Ascending aorta (tissue), 2 donors: ENCODE measurements at regions of chr1 and their contacts with region 1.

Region 1: DNA sequence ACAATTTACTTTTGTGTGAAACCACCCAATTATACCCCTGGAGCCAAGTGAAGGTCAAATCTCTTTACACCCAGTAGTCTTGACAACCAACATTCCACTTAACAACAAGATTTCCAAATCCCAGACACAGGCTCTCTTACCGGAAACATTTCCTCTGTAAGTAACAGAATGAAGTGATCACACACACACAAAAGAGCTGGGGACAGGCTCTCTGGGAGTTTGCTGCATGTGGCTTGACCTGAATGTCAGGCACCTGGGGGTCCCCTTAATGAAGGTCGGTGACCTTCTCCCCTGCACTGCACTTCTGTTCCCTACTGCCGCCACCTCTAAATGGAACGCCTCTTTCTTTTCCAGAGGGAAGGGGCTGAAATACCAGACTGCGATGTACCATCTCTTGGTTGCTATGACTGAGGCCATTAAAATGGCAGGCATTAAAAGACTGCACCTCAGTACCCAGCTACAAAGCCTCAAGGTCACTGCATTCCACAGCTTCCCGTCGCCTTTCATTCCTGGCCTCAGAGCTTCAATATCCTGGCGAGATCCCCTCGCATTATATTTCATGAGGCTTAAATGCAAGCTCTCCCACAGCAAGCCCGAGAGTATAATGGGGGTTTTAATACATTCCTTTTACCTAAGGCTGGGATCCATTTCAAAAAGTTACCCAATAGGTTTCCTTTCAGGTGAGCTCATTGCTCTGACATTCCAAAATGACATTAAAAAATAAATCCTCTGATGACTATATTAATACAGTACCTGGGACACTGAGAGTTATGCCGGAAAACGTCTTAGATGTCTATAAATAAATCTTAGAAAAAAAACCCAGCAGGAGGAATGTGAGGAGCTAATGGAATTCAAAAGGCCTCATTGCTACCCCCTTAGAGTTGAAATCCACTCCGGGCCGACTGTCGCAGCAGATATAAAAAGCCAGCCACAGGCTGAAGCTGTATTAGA is 90.9 kb upstream of the DIRAS3 start:
- DNase-seq: no peak
- H3K4me3 ChIP-seq: no peak overlapping the region
- H3K27ac ChIP-seq: peak overlapping the region; percentile 27 to 54
- H3K4me1 ChIP-seq: peaks cover 0 to 13% of the 10 kb centered on the region in 2 donors
- H3K27me3 ChIP-seq: no peaks in the 10 kb centered on the region
- CTCF ChIP-seq: no peak

Region 2: GRCh38 chr1:67535474-67535873 is 605.9 kb before region 1 on chr1:
- intact Hi-C with region 1: no loop called
- DNase-seq: peak; percentile 33 to 90
- H3K4me3 ChIP-seq: no peak overlapping the region
- H3K27ac ChIP-seq: no peak overlapping the region
- H3K4me1 ChIP-seq: peaks cover 0 to 18% of the 10 kb centered on the region in 2 donors
- H3K27me3 ChIP-seq: no peaks in the 10 kb centered on the region
- CTCF ChIP-seq: peak; percentile 88 to 97 (median 94)

Region 3: DNA sequence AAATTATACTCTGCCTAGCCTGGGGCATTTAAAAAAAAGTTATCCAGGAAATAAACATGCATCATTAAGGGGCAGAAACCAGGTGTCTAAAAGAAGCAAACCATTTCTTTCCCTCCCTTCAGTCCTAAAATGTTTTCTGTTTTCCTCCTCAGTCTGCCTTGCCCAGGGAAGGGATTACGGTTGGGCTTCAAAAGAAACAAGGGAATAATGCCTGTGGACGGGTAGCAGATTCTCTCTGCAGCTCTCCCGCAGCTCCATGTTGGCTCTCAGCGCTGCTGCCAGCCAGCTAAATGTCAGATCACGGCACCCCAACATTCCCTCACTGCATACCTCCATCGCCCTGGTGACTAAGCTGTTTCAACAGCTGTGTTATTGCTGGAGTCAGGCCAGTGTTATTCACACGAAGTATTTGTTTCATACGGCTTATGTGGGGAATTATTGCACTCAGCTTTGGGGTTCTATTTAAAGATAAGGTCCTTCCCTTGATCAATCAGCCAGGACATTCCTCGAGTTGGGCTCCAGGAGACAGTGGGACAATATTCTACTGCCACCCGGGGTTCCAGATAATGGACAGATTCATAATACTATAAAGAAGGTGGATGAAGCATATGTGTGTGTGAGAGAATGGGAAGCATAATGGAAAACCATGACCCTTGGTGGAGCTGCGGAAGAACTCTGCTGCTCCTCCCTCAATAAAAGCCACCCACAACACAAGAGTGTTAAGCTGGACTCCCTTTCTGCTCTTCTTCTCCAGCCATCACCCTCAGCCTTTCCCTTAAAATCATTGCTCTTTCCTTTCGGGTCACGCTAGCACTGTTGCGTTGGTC is 32.8 kb after region 1 on chr1:
- intact Hi-C with region 1: loop called (anchors 5 kb)
- DNase-seq: peak in 1 of 2 donors; percentile 86
- H3K4me3 ChIP-seq: peak overlapping the region; percentile 23 to 28
- H3K27ac ChIP-seq: peak overlapping the region; percentile 58 to 66
- H3K4me1 ChIP-seq: peaks cover 5 to 47% of the 10 kb centered on the region in 2 donors
- H3K27me3 ChIP-seq: no peaks in the 10 kb centered on the region
- CTCF ChIP-seq: no peak